ENCODE measurements at regions of chr3 and their contacts with region 1.

Region 1: DNA sequence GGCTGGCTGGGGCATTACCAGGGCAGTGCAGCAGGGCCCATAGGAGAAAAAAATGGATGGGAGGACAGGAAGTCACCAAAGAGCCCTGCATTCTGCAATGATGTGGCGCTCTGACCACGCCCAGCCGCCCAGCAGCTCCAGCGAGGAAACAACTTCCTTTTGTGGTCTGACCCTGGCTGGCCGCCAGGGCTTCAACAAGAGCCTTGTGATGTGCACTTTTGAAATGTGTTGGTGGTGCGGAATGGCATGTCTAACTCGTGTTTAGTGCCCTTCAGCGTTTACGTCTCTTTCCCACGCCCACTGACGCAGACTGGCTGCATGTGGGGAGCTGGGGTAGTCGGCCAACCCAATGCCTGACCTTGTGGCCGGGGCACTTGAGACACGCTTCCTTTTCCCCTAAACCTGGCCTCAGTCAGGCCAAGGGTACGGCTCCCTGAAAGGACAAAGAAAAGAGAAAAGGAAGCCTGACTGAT is 81.9 kb upstream of the CTNNB1 start:
- DNase-seq: peak; percentile 94
- H3K4me3 Mint-ChIP-seq: peak overlapping the region; percentile 17
- H3K27ac Mint-ChIP-seq: peak overlapping the region; percentile 73
- H3K4me1 Mint-ChIP-seq: peaks cover 26% of the 10 kb centered on the region
- H3K27me3 Mint-ChIP-seq: no peaks in the 10 kb centered on the region

Region 2: DNA sequence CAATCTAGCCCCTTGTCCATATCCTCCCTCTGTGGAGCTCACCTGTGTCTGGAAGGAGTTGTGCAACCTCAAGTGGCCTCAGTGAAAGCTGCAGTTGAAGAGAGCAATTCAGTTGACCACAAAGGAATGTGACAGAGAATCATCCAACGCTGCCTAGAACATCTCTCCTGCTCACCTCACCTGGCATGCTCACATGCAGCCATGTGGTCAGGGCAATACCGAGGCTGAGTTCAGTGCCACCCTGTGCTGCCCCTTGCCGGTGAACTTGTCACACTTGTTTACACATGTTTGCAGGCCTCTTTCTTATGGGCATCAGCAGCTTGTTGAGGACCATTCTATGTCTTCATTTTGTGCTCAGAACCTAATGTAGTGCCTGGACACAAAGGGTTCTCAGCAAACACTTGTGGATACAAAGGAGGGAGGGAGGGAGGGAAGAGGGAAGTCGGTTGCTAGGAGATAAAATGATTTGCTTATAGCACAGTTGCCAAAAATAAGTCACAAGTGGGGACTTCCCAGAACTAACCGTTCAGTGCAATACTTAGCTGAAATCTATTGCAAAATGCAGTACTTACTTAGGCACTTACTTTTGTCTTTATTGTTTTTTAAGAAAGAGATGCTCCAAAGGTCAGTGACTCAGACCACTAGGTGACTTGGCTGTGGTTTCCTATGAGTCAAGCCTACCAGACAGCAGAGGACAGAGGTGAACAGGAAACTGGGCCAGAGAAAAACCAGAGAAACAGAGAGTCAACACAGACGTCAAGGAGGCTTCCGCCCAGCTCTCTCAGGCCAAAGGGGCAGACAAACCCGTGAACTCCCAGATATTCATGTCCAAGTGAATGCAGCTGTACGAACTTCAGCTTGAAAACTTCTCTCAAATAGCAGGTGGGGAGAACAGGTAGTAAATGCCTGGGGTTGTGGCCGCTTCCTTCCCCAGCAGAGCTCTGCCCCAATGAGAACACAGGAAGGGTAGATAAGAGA is 146.0 kb before region 1 on chr3:
- CTCF ChIA-PET with region 1: no interaction called
- intact Hi-C with region 1: loop called (anchors 1 kb)
- DNase-seq: peak; percentile 48
- H3K4me3 Mint-ChIP-seq: no peak overlapping the region
- H3K27ac Mint-ChIP-seq: peak overlapping the region; percentile 10
- H3K4me1 Mint-ChIP-seq: peaks cover 13% of the 10 kb centered on the region
- H3K27me3 Mint-ChIP-seq: peaks cover 26% of the 10 kb centered on the region

Region 3: GRCh38 chr3:41131224-41131623 is 13.8 kb after region 1 on chr3:
- CTCF ChIA-PET with region 1: no interaction called
- intact Hi-C with region 1: no loop called
- DNase-seq: no peak
- H3K4me3 Mint-ChIP-seq: no peak overlapping the region
- H3K27ac Mint-ChIP-seq: no peak overlapping the region
- H3K4me1 Mint-ChIP-seq: no peaks in the 10 kb centered on the region
- H3K27me3 Mint-ChIP-seq: peaks cover 2% of the 10 kb centered on the region

Region 4: GRCh38 chr3:41158947-41159346 is 41.5 kb after region 1 on chr3:
- CTCF ChIA-PET with region 1: no interaction called
- intact Hi-C with region 1: loop called (anchors 2 kb)
- DNase-seq: peak; percentile 37
- H3K4me3 Mint-ChIP-seq: no peak overlapping the region
- H3K27ac Mint-ChIP-seq: peak overlapping the region; percentile 67
- H3K4me1 Mint-ChIP-seq: peaks cover 22% of the 10 kb centered on the region
- H3K27me3 Mint-ChIP-seq: no peaks in the 10 kb centered on the region

Region 5: GRCh38 chr3:41188268-41188667 is 70.8 kb after region 1 on chr3:
- CTCF ChIA-PET with region 1: no interaction called
- intact Hi-C with region 1: loop called (anchors 1 kb)
- DNase-seq: peak; percentile 51
- H3K4me3 Mint-ChIP-seq: no peak overlapping the region
- H3K27ac Mint-ChIP-seq: no peak overlapping the region
- H3K4me1 Mint-ChIP-seq: peaks cover 29% of the 10 kb centered on the region
- H3K27me3 Mint-ChIP-seq: peaks cover 1% of the 10 kb centered on the region

Region 6: GRCh38 chr3:41608347-41608746 is 490.9 kb after region 1 on chr3:
- CTCF ChIA-PET with region 1: no interaction called
- intact Hi-C with region 1: loop called (anchors 5 kb)
- DNase-seq: no peak
- H3K4me3 Mint-ChIP-seq: no peak overlapping the region
- H3K27ac Mint-ChIP-seq: peak overlapping the region; percentile 52
- H3K4me1 Mint-ChIP-seq: peaks cover 12% of the 10 kb centered on the region
- H3K27me3 Mint-ChIP-seq: no peaks in the 10 kb centered on the region

Region 7: GRCh38 chr3:42831321-42831713 is 1713.9 kb after region 1 on chr3:
- CTCF ChIA-PET with region 1: interaction called, 10 read pairs
- intact Hi-C with region 1: no loop called
- DNase-seq: peak; percentile 92
- H3K4me3 Mint-ChIP-seq: no peak overlapping the region
- H3K27ac Mint-ChIP-seq: no peak overlapping the region
- H3K4me1 Mint-ChIP-seq: no peaks in the 10 kb centered on the region
- H3K27me3 Mint-ChIP-seq: no peaks in the 10 kb centered on the region

Measured in activated naive CD4-positive, alpha-beta T cell treated with anti-CD3 and anti-CD28 coated beads for 36 hours (primary cell).